Activated CD4-positive, alpha-beta T cell treated with anti-CD3 and anti-CD28 coated beads, Interleukin-2, amount 10 ng/mL, durations not matched to agents 7 days and 5 days (primary cell): ENCODE measurements at regions of chr19 and their contacts with region 1.

Region 1: DNA sequence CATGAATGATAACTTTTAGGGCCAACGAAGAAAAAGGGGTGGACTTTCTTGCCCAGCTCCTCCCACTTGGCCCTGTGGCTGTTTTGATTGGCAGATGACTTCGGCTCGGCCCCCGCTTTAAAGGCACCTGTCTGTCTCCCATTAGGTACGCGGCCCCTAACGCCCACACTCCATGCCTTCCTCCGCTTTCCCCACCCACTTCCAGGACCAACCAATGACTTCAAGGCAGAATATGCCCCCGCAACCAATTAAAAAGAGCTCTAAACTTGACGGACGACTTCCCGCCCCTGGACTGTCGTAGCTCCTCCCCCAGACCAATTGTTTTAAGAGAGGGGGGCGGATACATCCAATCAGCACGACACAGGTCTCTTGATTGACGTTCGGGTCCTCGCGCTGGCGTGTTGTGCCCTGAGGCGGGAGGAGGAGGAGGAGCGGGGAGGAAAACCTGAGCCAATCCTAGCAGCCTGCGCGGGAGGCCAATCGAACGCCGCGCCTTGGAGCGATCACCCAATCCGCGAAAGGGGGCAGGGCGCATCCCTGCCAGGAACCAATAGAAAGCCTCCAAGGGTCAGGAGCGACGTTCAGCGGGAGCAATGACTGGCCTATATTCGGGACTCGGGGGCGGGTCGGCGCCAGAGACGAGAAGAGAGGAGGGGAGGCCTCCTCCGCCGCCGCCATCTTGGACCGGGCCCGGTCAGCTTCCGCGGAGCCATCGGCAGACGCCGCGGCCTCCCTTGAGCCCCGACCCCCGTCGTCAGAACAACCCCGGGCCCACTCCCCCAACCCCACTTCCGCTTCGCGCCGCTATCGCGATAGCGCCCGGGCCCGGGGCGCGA is at the start of gene CNOT3:
- DNase-seq: peak; percentile 100
- H3K4me3 Mint-ChIP-seq: peak within 1 kb of the TSS; percentile 80
- H3K27ac Mint-ChIP-seq: peak within 1 kb of the TSS; percentile 93
- H3K4me1 Mint-ChIP-seq: peaks cover 32% of the 10 kb centered on the region
- H3K27me3 Mint-ChIP-seq: no peaks in the 10 kb centered on the region
- total RNA-seq, gene CNOT3: 63.7 to 64.8 TPM

Region 2: GRCh38 chr19:54115109-54116063 is 21.9 kb before region 1 on chr19 and contains the starts of genes PRPF31 and TFPT:
- CTCF ChIA-PET with region 1: interaction called, 10 read pairs
- POLR2A ChIA-PET with region 1: interaction called, 13 read pairs
- DNase-seq: peak; percentile 98
- H3K4me3 Mint-ChIP-seq: peak within 1 kb of the TSS; percentile 87
- H3K27ac Mint-ChIP-seq: peak within 1 kb of the TSS; percentile 91
- H3K4me1 Mint-ChIP-seq: peaks cover 35% of the 10 kb centered on the region
- H3K27me3 Mint-ChIP-seq: no peaks in the 10 kb centered on the region
- total RNA-seq, gene PRPF31: 74.1 to 83.8 TPM
- total RNA-seq, gene TFPT: 39.5 to 42.4 TPM

Region 3: DNA sequence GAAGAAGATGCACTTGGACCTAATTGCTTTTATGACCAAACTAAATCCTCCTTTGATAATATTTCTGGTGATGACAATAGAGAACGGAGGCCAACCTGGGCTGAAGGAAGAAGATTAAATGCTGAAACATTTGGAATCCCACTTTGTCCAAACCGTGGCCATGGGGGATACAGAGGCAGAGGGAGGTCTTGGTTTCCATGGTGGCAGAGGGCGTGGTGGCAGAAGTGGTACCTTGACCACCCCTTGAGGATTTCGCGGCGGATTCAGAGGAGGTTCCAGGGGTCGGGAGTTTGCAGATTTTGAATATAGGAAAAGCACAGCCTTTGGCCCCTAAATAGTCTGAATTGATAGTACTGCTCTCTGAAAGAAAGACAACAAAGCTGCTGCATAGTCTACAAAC is 92.7 kb after region 1 on chr19:
- CTCF ChIA-PET with region 1: no interaction called
- POLR2A ChIA-PET with region 1: no interaction called
- DNase-seq: no peak
- H3K4me3 Mint-ChIP-seq: no peak overlapping the region
- H3K27ac Mint-ChIP-seq: no peak overlapping the region
- H3K4me1 Mint-ChIP-seq: peaks cover 3% of the 10 kb centered on the region
- H3K27me3 Mint-ChIP-seq: peaks cover 30% of the 10 kb centered on the region